GM10248 (cell line): ENCODE measurements at regions of chr13 and their contacts with region 1.

Region 1: DNA sequence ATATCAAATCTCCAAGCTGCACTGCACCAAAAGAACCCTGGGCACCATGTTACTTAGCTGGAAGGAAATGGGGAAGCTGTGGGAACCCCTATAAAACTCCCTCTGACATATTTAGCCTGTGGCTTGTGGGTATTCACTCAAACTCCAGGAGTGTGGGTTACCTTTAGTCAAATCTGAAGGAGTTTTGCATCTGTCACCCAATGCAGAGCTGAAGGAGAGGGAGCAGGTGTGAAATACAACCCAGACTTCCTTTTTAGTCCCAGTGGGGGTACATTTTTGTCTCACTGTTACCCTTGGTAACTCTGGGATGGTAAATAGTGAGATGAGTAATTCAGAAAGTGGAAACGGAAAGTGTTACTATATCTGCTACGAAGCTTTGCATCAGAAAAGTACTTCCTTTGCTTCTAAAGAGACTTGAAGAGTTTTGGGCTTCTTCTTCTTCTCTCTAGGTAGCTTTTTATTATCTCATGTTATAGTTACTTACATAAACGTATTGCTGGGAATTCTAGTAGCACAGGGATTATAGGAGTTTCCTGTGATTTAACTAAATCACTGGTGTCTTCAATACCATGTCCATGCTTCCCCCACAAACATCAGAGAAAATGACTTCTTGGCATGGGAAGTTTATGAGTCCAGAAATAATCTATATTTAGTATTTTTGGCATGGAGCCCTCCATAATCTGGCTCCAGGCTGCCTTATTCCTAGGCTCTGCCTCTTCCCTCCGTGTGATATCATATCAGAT is 105.9 kb downstream of the AKAP11 start:
- DNase-seq: peak; percentile 59
- CTCF ChIP-seq: no peak

Region 2: GRCh38 chr13:42363941-42364612 is 13.7 kb before region 1 on chr13:
- CTCF ChIA-PET with region 1: interaction called, 11 read pairs
- POLR2A ChIA-PET with region 1: interaction called, 4 read pairs
- DNase-seq: no peak
- CTCF ChIP-seq: no peak

Region 3: GRCh38 chr13:42392716-42393572 is 15.1 kb after region 1 on chr13:
- CTCF ChIA-PET with region 1: interaction called, 95 read pairs
- POLR2A ChIA-PET with region 1: interaction called, 6 read pairs
- DNase-seq: no peak
- CTCF ChIP-seq: no peak

Region 4: GRCh38 chr13:42401376-42401775 is 23.6 kb after region 1 on chr13:
- CTCF ChIA-PET with region 1: interaction called, 95 read pairs
- POLR2A ChIA-PET with region 1: interaction called, 6 read pairs
- DNase-seq: no peak
- CTCF ChIP-seq: no peak